ENCODE measurements at regions of chr15 and their contacts with region 1.

Region 1: DNA sequence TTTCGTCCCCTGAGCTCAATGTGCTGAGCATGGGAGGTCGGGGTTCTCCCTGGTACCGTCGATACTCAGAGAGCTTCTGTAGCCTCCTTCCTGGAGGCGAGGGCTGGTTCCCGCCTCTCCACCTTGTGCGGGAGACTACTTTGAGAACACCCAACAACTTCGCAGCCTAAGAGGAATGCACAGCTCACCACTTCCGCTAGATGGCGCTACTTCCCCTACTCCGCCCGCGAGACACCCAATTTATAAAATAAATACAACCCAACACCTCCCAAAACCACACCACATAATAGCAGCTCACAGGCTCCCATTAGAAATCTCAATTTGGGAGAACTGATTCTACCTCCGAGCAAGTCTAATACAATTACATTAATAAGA is 1.2 kb downstream of the RGMA start:
- DNase-seq: peak; percentile 70 to 83
- ATAC-seq: peak; percentile 53 to 57
- H3K4me3 ChIP-seq: peak overlapping the region; percentile 76 to 97 (median 80)
- H3K27ac ChIP-seq: peak overlapping the region; percentile 91 to 96 (median 93)
- H3K4me1 ChIP-seq: peaks cover 55 to 60% of the 10 kb centered on the region in 2 donors
- H3K27me3 ChIP-seq: no peaks in the 10 kb centered on the region
- CTCF ChIP-seq: peak; percentile 91 to 97 (median 95)
- POLR2A ChIP-seq: no peak

Region 2: GRCh38 chr15:92803847-92804609 is 283.8 kb before region 1 on chr15:
- in situ Hi-C with region 1: no loop called
- intact Hi-C with region 1: loop called (anchors 5 kb)
- DNase-seq: peak; percentile 80 to 89
- ATAC-seq: peak; percentile 86 to 89
- H3K4me3 ChIP-seq: no peak overlapping the region
- H3K27ac ChIP-seq: peak overlapping the region; percentile 97 to 99 (median 98)
- H3K4me1 ChIP-seq: peaks cover 40 to 45% of the 10 kb centered on the region in 2 donors
- H3K27me3 ChIP-seq: no peaks in the 10 kb centered on the region
- CTCF ChIP-seq: peak in 1 of 5 experiments; percentile 11
- POLR2A ChIP-seq: peak; percentile 37 to 66

Region 3: GRCh38 chr15:93152951-93153350 is 65.1 kb after region 1 on chr15:
- in situ Hi-C with region 1: no loop called
- intact Hi-C with region 1: loop called (anchors 5 kb)
- DNase-seq: peak; percentile 81 to 84
- ATAC-seq: peak; percentile 91 to 94
- H3K4me3 ChIP-seq: no peak overlapping the region
- H3K27ac ChIP-seq: peak overlapping the region in 1 of 4 donors; percentile 61
- H3K4me1 ChIP-seq: peaks cover 13 to 28% of the 10 kb centered on the region in 2 donors
- H3K27me3 ChIP-seq: no peaks in the 10 kb centered on the region
- CTCF ChIP-seq: no peak
- POLR2A ChIP-seq: no peak

Region 4: GRCh38 chr15:93250950-93251349 is 163.1 kb after region 1 on chr15:
- in situ Hi-C with region 1: no loop called
- intact Hi-C with region 1: loop called (anchors 5 kb)
- DNase-seq: no peak
- ATAC-seq: peak; percentile 28 to 34
- H3K4me3 ChIP-seq: no peak overlapping the region
- H3K27ac ChIP-seq: peak overlapping the region in 3 of 4 donors; percentile 24 to 42 (median 40)
- H3K4me1 ChIP-seq: peaks cover 5 to 6% of the 10 kb centered on the region in 2 donors
- H3K27me3 ChIP-seq: no peaks in the 10 kb centered on the region
- CTCF ChIP-seq: no peak
- POLR2A ChIP-seq: no peak

Region 5: DNA sequence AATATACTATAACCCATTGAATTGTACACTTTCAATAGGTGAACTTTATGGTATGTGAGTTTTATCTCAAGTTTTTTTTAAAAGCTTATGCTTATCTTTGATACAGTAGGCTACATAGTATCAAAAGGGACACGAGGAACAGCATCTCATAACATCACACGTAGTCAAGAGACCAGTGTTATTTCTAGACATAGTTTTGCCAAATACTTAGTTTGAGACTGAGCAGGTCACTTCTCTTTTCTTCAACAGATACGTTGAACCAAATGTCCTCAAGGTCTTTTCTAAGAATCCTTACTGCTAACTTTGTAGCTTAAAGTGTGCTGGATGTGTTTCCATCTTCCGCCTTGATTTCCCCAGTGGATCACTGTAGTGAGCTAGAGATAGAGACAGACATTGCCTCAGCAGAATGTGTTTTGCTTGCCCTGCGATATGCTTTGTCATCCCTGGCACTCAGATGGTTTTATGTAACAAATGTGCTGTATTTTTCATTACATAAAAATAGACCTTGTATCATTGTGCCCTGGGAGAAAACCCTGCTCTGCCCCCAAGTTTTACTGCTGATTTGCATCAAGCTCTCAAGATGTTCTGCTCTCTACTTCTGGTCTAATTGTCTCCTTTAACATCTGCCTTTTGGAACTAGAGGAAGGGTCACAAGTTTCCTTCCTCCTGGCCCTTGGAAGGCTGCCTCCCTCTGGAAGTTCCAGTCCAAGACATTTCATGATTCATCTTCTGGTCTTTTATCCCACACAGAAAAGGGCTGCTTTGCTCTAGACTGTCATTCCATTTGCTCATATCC is 427.6 kb after region 1 on chr15:
- in situ Hi-C with region 1: no loop called
- intact Hi-C with region 1: loop called (anchors 5 kb)
- DNase-seq: peak; percentile 55 to 62
- ATAC-seq: peak; percentile 89 to 94
- H3K4me3 ChIP-seq: no peak overlapping the region
- H3K27ac ChIP-seq: peak overlapping the region; percentile 59 to 86 (median 77)
- H3K4me1 ChIP-seq: peaks cover 29 to 36% of the 10 kb centered on the region in 2 donors
- H3K27me3 ChIP-seq: no peaks in the 10 kb centered on the region
- CTCF ChIP-seq: peak in 1 of 5 experiments; percentile 13
- POLR2A ChIP-seq: no peak

Measured in gastrocnemius medialis (tissue), 4 donors.